Heart right ventricle (tissue), 16 donors: ENCODE measurements at regions of chr1 and their contacts with region 1.

Region 1: DNA sequence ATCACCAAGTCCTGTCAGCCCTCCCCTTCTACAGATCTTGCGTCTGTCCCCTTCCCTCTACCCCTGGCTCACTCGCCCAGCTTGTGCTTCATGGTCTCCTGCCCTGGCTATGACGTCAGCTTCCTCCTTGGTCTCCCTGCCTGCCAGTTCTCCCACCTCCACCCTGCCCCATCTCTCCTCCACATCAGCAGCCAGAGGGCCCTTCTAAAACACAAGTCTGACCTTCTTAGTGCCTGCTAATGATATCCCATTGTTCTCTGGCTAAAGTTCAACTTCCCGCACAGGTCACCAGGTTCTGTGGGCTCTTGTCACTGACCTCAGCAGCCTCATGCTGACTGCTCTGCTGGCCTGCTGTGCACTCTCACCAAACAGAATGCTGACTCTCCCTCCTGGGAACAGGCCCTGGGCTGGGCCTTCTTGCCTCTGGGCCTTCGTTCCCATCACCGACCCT is 24.7 kb upstream of the MYCL start:
- DNase-seq: no peak
- ATAC-seq: peak in 7 of 8 donors; percentile 21 to 61 (median 38)
- H3K4me3 ChIP-seq: no peak overlapping the region
- H3K27ac ChIP-seq: no peak overlapping the region
- H3K4me1 ChIP-seq: peaks cover 0 to 27% (median 12%) of the 10 kb centered on the region in 9 donors
- H3K27me3 ChIP-seq: peaks cover 0 to 26% (median 15%) of the 10 kb centered on the region in 7 donors
- CTCF ChIP-seq: no peak

Region 2: DNA sequence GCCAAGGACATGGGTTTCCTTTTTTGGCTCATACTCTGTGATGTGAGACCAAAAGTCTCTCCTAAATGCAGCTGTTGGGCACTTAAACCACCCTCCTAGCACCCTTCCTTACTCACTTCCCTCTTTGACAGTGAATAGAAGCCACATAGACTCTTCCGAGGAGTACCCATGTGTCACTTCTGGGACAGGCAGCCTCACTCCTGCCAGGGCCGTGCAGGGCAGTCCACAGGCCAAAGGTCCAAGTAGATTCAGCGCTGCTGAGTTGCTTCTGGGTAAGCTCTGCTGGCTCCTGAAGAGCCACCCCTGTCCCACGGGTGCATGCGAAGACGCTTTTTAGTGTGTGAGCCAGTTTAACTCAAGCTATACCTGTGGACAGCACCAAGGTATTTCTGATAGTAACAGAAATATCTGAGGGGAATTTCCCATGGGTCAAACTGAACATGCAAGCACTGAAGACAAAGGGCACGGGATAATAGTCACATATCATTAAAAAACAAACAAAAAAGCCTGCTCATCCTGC is 100.9 kb before region 1 on chr1:
- intact Hi-C with region 1: no loop called
- DNase-seq: no peak
- ATAC-seq: peak in 2 of 8 donors; percentile 14 to 33
- H3K4me3 ChIP-seq: no peak overlapping the region
- H3K27ac ChIP-seq: no peak overlapping the region
- H3K4me1 ChIP-seq: no peaks in the 10 kb centered on the region
- H3K27me3 ChIP-seq: peaks cover 0 to 25% (median 11%) of the 10 kb centered on the region in 7 donors
- CTCF ChIP-seq: no peak

Region 3: GRCh38 chr1:39960431-39960958 is 34.1 kb after region 1 on chr1:
- intact Hi-C with region 1: loop called in 1 of 10 experiments (anchors 5 kb)
- DNase-seq: peak in 1 of 2 donors; percentile 13
- ATAC-seq: peak in 5 of 8 donors; percentile 5 to 53 (median 34)
- H3K4me3 ChIP-seq: peak overlapping the region in 1 of 10 donors; percentile 20
- H3K27ac ChIP-seq: peak overlapping the region in 1 of 10 donors; percentile 79
- H3K4me1 ChIP-seq: peaks cover 6 to 34% (median 10%) of the 10 kb centered on the region in 9 donors
- H3K27me3 ChIP-seq: peaks cover 0 to 17% (median 8%) of the 10 kb centered on the region in 7 donors
- CTCF ChIP-seq: no peak

Region 4: GRCh38 chr1:40040511-40041465 is 114.4 kb after region 1 on chr1 and contains the start of gene CAP1:
- intact Hi-C with region 1: loop called in 1 of 10 experiments (anchors 10 kb)
- DNase-seq: peak; percentile 99 to 100
- ATAC-seq: peak; percentile 94 to 97 (median 96)
- H3K4me3 ChIP-seq: peak within 1 kb of the TSS; percentile 64 to 99 (median 91)
- H3K27ac ChIP-seq: peak within 1 kb of the TSS; percentile 97 to 100 (median 100)
- H3K4me1 ChIP-seq: peaks cover 6 to 85% (median 75%) of the 10 kb centered on the region in 9 donors
- H3K27me3 ChIP-seq: no peaks in the 10 kb centered on the region
- CTCF ChIP-seq: no peak
- total RNA-seq, gene CAP1: 46.4 to 157 (median 55.8) TPM

Region 5: GRCh38 chr1:40385437-40386358 is 459.3 kb after region 1 on chr1:
- intact Hi-C with region 1: no loop called
- DNase-seq: no peak
- ATAC-seq: peak in 6 of 8 donors; percentile 24 to 77 (median 52)
- H3K4me3 ChIP-seq: peak overlapping the region in 3 of 10 donors; percentile 9 to 36 (median 11)
- H3K27ac ChIP-seq: peak overlapping the region; percentile 29 to 99 (median 62)
- H3K4me1 ChIP-seq: peaks cover 9 to 97% (median 27%) of the 10 kb centered on the region in 9 donors
- H3K27me3 ChIP-seq: no peaks in the 10 kb centered on the region
- CTCF ChIP-seq: no peak

Region 6: GRCh38 chr1:40553017-40553416 is 626.6 kb after region 1 on chr1:
- intact Hi-C with region 1: no loop called
- DNase-seq: no peak
- ATAC-seq: no peak
- H3K4me3 ChIP-seq: no peak overlapping the region
- H3K27ac ChIP-seq: no peak overlapping the region
- H3K4me1 ChIP-seq: no peaks in the 10 kb centered on the region
- H3K27me3 ChIP-seq: no peaks in the 10 kb centered on the region
- CTCF ChIP-seq: no peak